ENCODE measurements at regions of chr7 and their contacts with region 1.

Region 1: GRCh38 chr7:81150951-81151361 is 232.1 kb upstream of the SEMA3C start:
- DNase-seq: peak; percentile 15 to 28
- ATAC-seq: peak; percentile 72 to 92 (median 81)
- H3K4me3 ChIP-seq: no peak overlapping the region
- H3K27ac ChIP-seq: peak overlapping the region; percentile 56
- H3K4me1 ChIP-seq: peaks cover 8% of the 10 kb centered on the region
- H3K27me3 ChIP-seq: no peaks in the 10 kb centered on the region
- CTCF ChIP-seq: no peak

Region 2: DNA sequence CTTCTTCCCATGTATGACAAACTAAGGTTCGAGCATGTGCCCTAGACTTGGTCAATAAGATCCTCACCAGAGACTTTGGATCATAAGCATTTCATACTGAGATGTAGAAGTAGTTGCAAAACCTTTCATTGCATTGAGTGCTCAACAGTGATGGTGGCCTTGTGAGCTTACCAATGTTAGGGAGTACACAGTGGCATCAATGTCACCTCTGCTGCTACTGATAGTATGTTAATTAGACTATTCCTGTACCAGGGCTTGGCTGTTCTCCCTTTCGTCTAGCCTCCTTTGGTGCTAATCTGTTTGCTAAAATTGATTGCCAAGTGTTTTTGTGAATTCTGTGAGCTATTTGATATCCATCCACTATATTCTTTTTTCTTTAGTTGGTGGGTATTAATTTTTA is 32.4 kb after region 1 on chr7:
- intact Hi-C with region 1: no loop called
- DNase-seq: no peak
- ATAC-seq: no peak
- H3K4me3 ChIP-seq: no peak overlapping the region
- H3K27ac ChIP-seq: no peak overlapping the region
- H3K4me1 ChIP-seq: no peaks in the 10 kb centered on the region
- H3K27me3 ChIP-seq: no peaks in the 10 kb centered on the region
- CTCF ChIP-seq: no peak

Region 3: DNA sequence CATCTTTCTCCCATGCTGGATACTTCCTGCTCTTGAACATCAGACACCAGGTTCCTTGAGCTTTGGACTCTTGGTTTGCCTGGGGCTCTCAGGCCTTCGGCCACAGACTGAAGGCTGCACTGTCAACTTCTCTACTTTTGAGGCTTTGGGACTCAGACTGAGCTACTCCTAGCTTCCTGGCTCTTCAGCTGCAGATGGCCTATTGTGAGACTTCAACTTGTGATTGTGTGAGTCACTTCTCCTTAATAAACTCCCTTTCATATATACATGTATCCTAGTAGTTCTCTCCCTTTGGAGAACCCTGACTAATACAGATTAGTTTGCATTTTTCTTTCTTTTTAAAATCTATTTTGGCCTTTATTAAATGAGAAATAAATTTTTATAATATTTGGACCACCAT is 44.1 kb after region 1 on chr7:
- intact Hi-C with region 1: loop called in 1 of 2 experiments (anchors 5 kb)
- DNase-seq: no peak
- ATAC-seq: no peak
- H3K4me3 ChIP-seq: no peak overlapping the region
- H3K27ac ChIP-seq: no peak overlapping the region
- H3K4me1 ChIP-seq: peaks cover 6% of the 10 kb centered on the region
- H3K27me3 ChIP-seq: no peaks in the 10 kb centered on the region
- CTCF ChIP-seq: no peak

Region 4: DNA sequence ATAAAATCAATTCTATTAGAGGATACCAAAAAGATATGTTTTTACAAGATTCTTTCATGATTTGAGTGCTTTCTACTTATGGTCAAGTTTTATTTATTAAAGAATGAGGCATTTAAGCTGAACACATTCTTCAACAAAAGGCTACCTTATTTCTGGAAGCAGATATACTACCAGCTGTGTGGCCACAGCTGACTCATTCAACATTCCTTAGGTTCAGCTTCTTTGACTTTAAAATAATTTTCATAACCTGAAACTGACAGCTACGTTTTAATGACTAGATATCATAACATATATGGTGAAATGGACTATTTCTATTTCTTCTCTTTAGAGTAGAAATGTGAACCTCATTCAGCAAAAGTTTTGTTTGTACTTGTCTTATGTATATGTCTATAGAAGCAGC is 182.0 kb after region 1 on chr7:
- intact Hi-C with region 1: no loop called
- DNase-seq: no peak
- ATAC-seq: no peak
- H3K4me3 ChIP-seq: no peak overlapping the region
- H3K27ac ChIP-seq: no peak overlapping the region
- H3K4me1 ChIP-seq: no peaks in the 10 kb centered on the region
- H3K27me3 ChIP-seq: no peaks in the 10 kb centered on the region
- CTCF ChIP-seq: no peak